T-cell (primary cell): ENCODE measurements at regions of chr12 and their contacts with region 1.

Region 1: DNA sequence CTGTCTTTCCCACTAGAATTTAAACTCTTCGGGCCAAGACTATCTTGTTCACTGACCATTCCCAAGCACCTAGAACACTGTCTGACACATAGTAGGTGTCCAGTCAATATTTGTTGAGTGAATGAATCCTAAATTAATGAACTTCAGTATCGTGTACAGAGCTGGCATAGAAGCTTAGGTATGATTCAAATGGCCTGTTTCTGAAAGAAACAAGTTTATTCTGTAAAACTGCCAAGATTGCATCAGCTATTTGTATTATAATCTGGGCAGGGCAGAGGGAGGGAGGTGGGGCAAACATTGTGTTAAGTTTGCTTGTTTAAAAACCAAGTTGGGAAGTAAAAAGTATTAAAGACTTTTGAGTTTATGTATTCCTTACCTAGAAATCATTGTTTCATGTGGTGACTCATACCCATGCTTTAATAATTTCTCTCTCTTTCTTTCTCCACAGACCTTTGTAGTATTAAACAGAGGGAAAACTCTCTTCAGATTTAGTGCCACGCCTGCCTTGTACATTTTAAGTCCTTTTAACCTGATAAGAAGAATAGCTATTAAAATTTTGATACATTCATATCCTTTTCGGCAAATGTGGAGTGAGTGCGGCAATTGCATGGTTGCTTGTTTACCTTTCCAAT is 92.8 kb downstream of the SCN8A start:
- DNase-seq: no peak
- ATAC-seq: no peak
- H3K4me3 ChIP-seq: no peak overlapping the region
- H3K4me3 Mint-ChIP-seq: no peak overlapping the region
- H3K27ac ChIP-seq: no peak overlapping the region
- H3K27ac Mint-ChIP-seq: no peak overlapping the region
- H3K4me1 ChIP-seq: peaks cover 0 to 15% of the 10 kb centered on the region in 2 experiments
- H3K4me1 Mint-ChIP-seq: peaks cover 0 to 5% (median 4%) of the 10 kb centered on the region in 3 donors
- H3K27me3 ChIP-seq: no peaks in the 10 kb centered on the region
- H3K27me3 Mint-ChIP-seq: peaks cover 8 to 11% of the 10 kb centered on the region in 2 donors

Region 2: DNA sequence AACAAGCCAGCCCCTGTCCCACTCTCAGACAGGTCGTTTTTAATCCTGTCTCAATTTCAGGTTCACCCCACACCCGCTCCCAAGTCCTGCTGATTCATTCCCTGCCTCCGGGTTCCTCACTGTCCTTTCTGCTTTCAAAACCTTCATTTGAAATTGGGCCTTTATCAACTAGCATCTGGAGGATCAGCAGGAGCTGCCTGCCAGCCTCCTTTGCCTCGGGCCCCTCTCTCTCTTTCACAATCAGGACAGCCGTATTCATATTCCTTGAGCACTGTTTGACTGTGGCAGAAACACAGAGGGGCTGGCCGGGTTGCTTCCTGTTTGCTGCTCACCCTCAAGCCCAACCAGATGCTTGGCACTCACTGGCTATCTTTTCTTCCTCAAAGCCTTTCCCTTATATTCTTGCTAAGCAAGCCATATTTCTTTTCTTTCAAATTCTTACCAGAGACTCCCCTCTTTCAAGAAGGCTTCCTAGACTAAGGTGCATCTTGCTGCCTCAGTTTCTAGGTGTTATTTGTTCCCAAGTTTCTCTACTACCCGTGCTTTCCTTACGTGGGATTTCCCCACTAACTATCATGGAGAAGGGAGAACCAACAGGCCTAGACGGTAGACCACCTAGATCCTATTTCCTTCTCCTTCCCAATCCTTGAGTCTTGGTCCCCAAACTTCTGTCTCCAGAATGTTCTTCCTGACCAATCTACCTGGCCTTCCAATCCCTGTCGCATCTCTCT is 295.6 kb before region 1 on chr12:
- CTCF ChIA-PET with region 1: interaction called in 1 of 2 experiments, 13 read pairs
- POLR2A ChIA-PET with region 1: no interaction called
- DNase-seq: no peak
- ATAC-seq: no peak
- H3K4me3 ChIP-seq: no peak overlapping the region
- H3K4me3 Mint-ChIP-seq: peak overlapping the region in 1 of 3 donors; percentile 4
- H3K27ac ChIP-seq: no peak overlapping the region
- H3K27ac Mint-ChIP-seq: peak overlapping the region; percentile 1 to 25
- H3K4me1 ChIP-seq: peaks cover 31 to 50% of the 10 kb centered on the region in 2 experiments
- H3K4me1 Mint-ChIP-seq: peaks cover 63 to 78% (median 72%) of the 10 kb centered on the region in 3 donors
- H3K27me3 ChIP-seq: no peaks in the 10 kb centered on the region
- H3K27me3 Mint-ChIP-seq: no peaks in the 10 kb centered on the region

Region 3: GRCh38 chr12:51672334-51672733 is 11.5 kb before region 1 on chr12:
- CTCF ChIA-PET with region 1: no interaction called
- POLR2A ChIA-PET with region 1: no interaction called
- DNase-seq: no peak
- ATAC-seq: no peak
- H3K4me3 ChIP-seq: no peak overlapping the region
- H3K4me3 Mint-ChIP-seq: no peak overlapping the region
- H3K27ac ChIP-seq: no peak overlapping the region
- H3K27ac Mint-ChIP-seq: no peak overlapping the region
- H3K4me1 ChIP-seq: peaks cover 0 to 8% of the 10 kb centered on the region in 2 experiments
- H3K4me1 Mint-ChIP-seq: peaks cover 9 to 13% (median 13%) of the 10 kb centered on the region in 3 donors
- H3K27me3 ChIP-seq: no peaks in the 10 kb centered on the region
- H3K27me3 Mint-ChIP-seq: peaks cover 9 to 10% of the 10 kb centered on the region in 2 donors

Region 4: GRCh38 chr12:51695241-51696010 is 11.6 kb after region 1 on chr12:
- CTCF ChIA-PET with region 1: no interaction called
- POLR2A ChIA-PET with region 1: no interaction called
- DNase-seq: no peak
- ATAC-seq: no peak
- H3K4me3 ChIP-seq: no peak overlapping the region
- H3K4me3 Mint-ChIP-seq: no peak overlapping the region
- H3K27ac ChIP-seq: no peak overlapping the region
- H3K27ac Mint-ChIP-seq: no peak overlapping the region
- H3K4me1 ChIP-seq: no peaks in the 10 kb centered on the region
- H3K4me1 Mint-ChIP-seq: no peaks in the 10 kb centered on the region
- H3K27me3 ChIP-seq: no peaks in the 10 kb centered on the region
- H3K27me3 Mint-ChIP-seq: peaks cover 7 to 8% of the 10 kb centered on the region in 2 donors

Region 5: GRCh38 chr12:51874486-51874885 is 190.6 kb after region 1 on chr12:
- CTCF ChIA-PET with region 1: no interaction called
- POLR2A ChIA-PET with region 1: no interaction called
- DNase-seq: no peak
- ATAC-seq: no peak
- H3K4me3 ChIP-seq: no peak overlapping the region
- H3K4me3 Mint-ChIP-seq: no peak overlapping the region
- H3K27ac ChIP-seq: no peak overlapping the region
- H3K27ac Mint-ChIP-seq: no peak overlapping the region
- H3K4me1 ChIP-seq: peaks cover 0 to 3% of the 10 kb centered on the region in 2 experiments
- H3K4me1 Mint-ChIP-seq: peaks cover 0 to 6% (median 1%) of the 10 kb centered on the region in 3 donors
- H3K27me3 ChIP-seq: peaks cover 0 to 35% of the 10 kb centered on the region in 2 experiments
- H3K27me3 Mint-ChIP-seq: peaks cover 15 to 28% of the 10 kb centered on the region in 2 donors